ENCODE measurements at regions of chr6 and their contacts with region 1.

Region 1: GRCh38 chr6:99568103-99568933 is at the start of gene CCNC:
- DNase-seq: peak; percentile 93
- H3K4me3 Mint-ChIP-seq: peak within 1 kb of the TSS; percentile 92
- H3K27ac Mint-ChIP-seq: peak within 1 kb of the TSS; percentile 92
- H3K4me1 Mint-ChIP-seq: peaks cover 28% of the 10 kb centered on the region
- H3K27me3 Mint-ChIP-seq: no peaks in the 10 kb centered on the region
- total RNA-seq, gene CCNC: 51.6 to 51.8 TPM

Region 2: GRCh38 chr6:98947351-98948292 is 620.7 kb before region 1 on chr6 and contains the start of gene FBXL4:
- CTCF ChIA-PET with region 1: no interaction called
- intact Hi-C with region 1: loop called (anchors 2 kb)
- DNase-seq: peak; percentile 84
- H3K4me3 Mint-ChIP-seq: peak within 1 kb of the TSS; percentile 93
- H3K27ac Mint-ChIP-seq: peak within 1 kb of the TSS; percentile 93
- H3K4me1 Mint-ChIP-seq: peaks cover 34% of the 10 kb centered on the region
- H3K27me3 Mint-ChIP-seq: peaks cover 2% of the 10 kb centered on the region
- total RNA-seq, gene FBXL4: 16.3 to 16.7 TPM

Region 3: DNA sequence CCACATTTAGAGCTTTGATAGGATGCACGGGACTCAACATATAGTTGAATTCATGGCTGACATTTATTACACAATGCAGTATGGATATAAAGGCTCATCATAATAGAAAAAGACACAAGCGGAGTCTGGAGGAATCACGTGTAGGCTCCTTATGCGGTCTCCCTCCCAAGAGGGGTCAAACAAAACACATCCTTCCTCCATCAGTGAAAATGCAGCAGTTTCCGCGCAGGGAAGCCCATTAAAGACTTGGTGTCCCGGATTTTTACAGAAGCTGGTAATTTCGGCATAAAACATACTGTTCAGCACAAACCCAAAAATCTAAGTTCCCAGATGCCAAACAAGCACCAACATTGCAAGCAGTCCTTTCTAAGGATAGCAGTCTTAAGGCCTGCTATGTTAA is 54.2 kb before region 1 on chr6:
- CTCF ChIA-PET with region 1: interaction called, 4 read pairs
- intact Hi-C with region 1: loop called (anchors 1 kb)
- DNase-seq: no peak
- H3K4me3 Mint-ChIP-seq: peak overlapping the region; percentile 93
- H3K27ac Mint-ChIP-seq: no peak overlapping the region
- H3K4me1 Mint-ChIP-seq: peaks cover 27% of the 10 kb centered on the region
- H3K27me3 Mint-ChIP-seq: no peaks in the 10 kb centered on the region

Region 4: DNA sequence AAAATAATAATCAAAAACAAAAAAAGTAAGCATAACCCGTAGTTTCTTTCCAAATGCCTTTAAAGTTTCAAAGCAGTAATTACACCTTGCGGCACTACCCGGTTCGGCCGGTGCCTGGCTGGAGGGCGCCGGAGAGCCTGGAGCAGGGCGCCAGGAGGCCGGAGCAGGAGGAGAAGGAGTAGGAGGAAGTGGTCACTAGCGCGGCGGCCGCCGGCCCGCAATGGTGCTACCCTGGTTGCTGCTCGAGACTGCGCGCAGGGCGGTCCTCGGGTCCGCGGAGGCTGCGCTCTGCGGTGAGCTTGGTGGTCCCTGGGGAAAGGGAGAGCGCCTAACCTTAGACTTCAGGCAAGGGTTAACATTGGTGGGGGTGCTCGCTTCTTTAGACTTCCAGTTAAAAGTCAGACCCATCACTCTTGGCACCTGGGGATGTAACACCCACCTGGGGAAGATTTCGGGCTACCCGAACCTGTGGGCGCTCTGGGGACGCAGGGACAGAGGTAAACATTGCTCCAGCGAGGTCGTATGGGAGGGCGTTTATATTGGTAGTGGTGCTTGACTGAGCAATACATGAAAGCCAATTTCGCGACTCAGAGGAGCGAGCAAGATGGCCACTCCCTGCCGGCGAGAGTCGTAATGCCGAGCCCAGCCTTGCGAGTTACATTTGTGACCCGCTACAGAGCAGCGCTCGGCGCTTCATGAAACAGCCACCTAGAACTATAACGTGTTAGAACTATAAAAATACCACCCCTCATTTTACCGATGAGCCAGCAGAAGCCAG is 47.3 kb before region 1 on chr6:
- CTCF ChIA-PET with region 1: interaction called, 7 read pairs
- intact Hi-C with region 1: loop called (anchors 1 kb)
- DNase-seq: peak; percentile 80
- H3K4me3 Mint-ChIP-seq: peak overlapping the region; percentile 96
- H3K27ac Mint-ChIP-seq: peak overlapping the region; percentile 84
- H3K4me1 Mint-ChIP-seq: peaks cover 12% of the 10 kb centered on the region
- H3K27me3 Mint-ChIP-seq: peaks cover 3% of the 10 kb centered on the region

Measured in activated naive CD4-positive, alpha-beta T cell treated with anti-CD3 and anti-CD28 coated beads for 36 hours (primary cell).